MCF 10A (cell line): ENCODE measurements at regions of chrX and their contacts with region 1.

Region 1: DNA sequence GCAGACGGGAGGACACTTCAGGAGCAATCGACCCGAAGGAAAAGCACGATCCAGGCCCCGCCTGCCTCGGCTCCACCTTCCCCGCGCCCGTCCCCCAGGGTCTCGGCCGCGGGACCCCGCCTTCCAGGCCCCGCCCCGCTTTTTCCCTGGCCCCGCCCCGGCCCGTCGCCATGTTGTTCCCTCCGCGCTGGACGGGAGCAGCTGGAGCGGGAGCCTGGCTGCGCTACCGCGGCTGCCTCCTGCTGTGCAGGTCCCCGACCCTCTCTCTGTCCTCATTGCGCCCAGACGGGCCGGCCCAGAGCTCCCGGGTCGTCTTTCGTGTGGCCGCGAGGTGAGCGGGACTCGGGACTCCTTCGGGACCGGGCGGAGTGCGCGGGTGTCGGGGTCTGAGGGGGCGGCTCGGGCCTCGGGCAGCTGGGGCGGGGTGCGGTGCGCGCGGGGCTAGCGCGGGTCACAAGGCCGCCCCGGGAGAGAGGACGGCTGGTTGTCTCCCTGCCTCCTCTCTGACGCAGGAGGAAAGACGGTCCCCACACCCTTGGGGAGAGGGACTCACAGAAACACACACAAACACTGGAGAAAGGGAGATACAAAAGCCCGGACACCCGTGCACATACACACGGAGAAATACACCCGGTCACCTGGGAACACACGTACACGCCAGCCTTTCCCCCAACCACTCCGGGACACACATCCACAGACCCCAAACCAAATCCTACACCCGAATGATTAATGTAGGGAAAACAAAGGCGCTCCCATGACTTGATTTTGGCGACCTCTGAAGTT is at the start of gene RAB9A:
- DNase-seq: peak; percentile 86
- H3K4me3 Mint-ChIP-seq: peak within 1 kb of the TSS; percentile 84
- H3K27ac Mint-ChIP-seq: peak within 1 kb of the TSS; percentile 77
- H3K4me1 Mint-ChIP-seq: peaks cover 37% of the 10 kb centered on the region
- H3K27me3 Mint-ChIP-seq: peaks cover 8% of the 10 kb centered on the region
- CTCF ChIP-seq: no peak
- total RNA-seq, gene RAB9A: 28.0 and 32.3 TPM in 2 replicates

Region 2: DNA sequence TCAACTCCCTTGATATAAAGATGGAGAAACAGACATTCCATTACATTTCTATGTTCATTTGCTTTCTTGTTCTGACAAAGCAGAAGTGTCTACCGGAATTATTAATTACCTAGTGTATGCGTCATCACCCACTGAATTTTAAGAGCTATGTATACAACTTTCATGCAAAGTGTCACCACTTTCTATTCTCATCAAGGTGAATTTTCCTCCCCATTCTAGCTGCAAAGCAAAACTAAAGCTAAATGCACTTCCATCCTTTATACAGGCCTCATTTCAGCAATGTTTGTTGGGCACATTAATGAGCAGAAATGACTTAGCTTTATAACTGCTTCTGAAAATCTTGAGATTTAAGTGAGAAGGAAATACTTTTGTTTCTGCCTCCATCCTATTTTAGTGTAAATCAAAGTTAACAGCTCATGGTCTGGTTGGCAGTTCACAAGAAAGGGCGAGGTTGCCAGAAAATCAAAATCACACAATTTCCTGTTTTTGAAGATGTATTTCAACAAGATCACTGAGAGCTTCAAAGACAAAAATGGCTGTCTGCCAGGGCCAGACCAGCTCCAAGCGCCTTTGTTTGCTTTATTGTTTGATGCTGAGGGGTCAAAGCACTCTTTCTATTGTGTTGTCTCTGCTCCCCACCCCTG is 637.5 kb before region 1 on chrX:
- CTCF ChIA-PET with region 1: no interaction called
- POLR2A ChIA-PET with region 1: no interaction called
- intact Hi-C with region 1: no loop called
- DNase-seq: peak; percentile 30
- H3K4me3 Mint-ChIP-seq: no peak overlapping the region
- H3K27ac Mint-ChIP-seq: no peak overlapping the region
- H3K4me1 Mint-ChIP-seq: no peaks in the 10 kb centered on the region
- H3K27me3 Mint-ChIP-seq: no peaks in the 10 kb centered on the region
- CTCF ChIP-seq: no peak

Region 3: DNA sequence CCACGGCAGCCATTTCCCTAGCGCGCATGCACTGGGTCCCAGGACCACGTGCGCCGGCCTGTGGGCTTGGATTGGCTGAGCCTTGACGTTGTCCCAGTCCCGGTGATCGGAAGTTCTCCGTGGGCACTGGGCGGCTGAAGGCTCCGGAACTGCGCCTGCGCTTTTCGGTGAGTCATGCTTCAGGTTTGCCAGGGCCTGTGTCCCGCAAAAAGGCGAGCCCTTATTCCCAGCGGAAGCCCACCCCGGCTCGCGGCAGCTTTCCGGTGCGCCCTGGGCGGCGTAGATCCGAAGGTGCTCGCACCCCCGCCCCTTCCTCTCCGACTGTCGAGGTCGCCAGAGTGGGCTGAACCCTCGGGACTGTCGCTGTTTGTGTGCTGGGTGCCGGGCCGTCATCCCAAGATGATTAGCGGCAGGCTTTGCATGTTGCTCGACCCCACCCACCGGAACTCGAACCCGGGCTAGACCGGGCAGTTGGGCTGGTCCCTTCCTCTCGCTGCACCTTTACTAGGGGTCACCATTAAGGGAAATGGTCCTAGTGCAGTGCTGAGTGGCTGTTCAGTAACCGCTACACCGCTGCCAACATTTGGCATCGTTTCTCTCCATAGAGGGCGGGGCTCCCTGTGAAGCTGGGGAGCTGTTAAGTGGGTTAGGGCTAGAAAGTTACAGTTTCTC is 36.0 kb before region 1 on chrX and contains the start of gene TCEANC:
- CTCF ChIA-PET with region 1: interaction called, 5 read pairs
- POLR2A ChIA-PET with region 1: interaction called, 28 read pairs
- intact Hi-C with region 1: no loop called
- DNase-seq: peak; percentile 98
- H3K4me3 Mint-ChIP-seq: peak within 1 kb of the TSS; percentile 89
- H3K27ac Mint-ChIP-seq: peak within 1 kb of the TSS; percentile 59
- H3K4me1 Mint-ChIP-seq: peaks cover 5% of the 10 kb centered on the region
- H3K27me3 Mint-ChIP-seq: peaks cover 20% of the 10 kb centered on the region
- CTCF ChIP-seq: no peak
- total RNA-seq, gene TCEANC: 4.0 TPM in 2 replicates

Region 4: DNA sequence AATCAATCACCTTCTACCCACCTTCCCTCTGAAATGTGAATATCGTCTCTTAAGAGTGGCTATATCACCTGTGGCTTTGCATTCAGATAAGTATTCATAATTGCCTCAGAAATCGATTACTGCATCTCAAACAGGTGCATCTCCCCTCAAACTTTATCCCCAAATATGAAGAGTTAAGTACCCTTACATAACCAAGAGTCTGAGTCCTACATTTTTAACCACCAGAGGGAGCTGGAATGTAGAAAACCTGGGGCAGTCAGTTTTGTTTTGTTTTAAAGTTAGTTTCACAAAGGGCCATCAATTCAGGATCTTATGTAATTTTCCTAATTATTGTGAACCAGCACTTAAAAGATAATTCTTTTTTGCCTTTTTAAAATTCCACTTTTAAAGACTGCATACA is 30.5 kb before region 1 on chrX:
- CTCF ChIA-PET with region 1: interaction called, 6 read pairs
- POLR2A ChIA-PET with region 1: interaction called, 28 read pairs
- intact Hi-C with region 1: loop called (anchors 1 kb)
- DNase-seq: peak; percentile 79
- H3K4me3 Mint-ChIP-seq: no peak overlapping the region
- H3K27ac Mint-ChIP-seq: peak overlapping the region; percentile 23
- H3K4me1 Mint-ChIP-seq: peaks cover 10% of the 10 kb centered on the region
- H3K27me3 Mint-ChIP-seq: peaks cover 12% of the 10 kb centered on the region
- CTCF ChIP-seq: peak; percentile 66

Region 5: GRCh38 chrX:13669246-13669737 is 19.9 kb before region 1 on chrX:
- CTCF ChIA-PET with region 1: interaction called, 7 read pairs
- POLR2A ChIA-PET with region 1: interaction called, 49 read pairs
- intact Hi-C with region 1: no loop called
- DNase-seq: peak; percentile 99
- H3K4me3 Mint-ChIP-seq: peak overlapping the region; percentile 41
- H3K27ac Mint-ChIP-seq: peak overlapping the region; percentile 90
- H3K4me1 Mint-ChIP-seq: no peaks in the 10 kb centered on the region
- H3K27me3 Mint-ChIP-seq: peaks cover 22% of the 10 kb centered on the region
- CTCF ChIP-seq: no peak

Region 6: GRCh38 chrX:13676885-13677284 is 12.3 kb before region 1 on chrX:
- CTCF ChIA-PET with region 1: no interaction called
- POLR2A ChIA-PET with region 1: interaction called, 12 read pairs
- intact Hi-C with region 1: no loop called
- DNase-seq: no peak
- H3K4me3 Mint-ChIP-seq: no peak overlapping the region
- H3K27ac Mint-ChIP-seq: no peak overlapping the region
- H3K4me1 Mint-ChIP-seq: no peaks in the 10 kb centered on the region
- H3K27me3 Mint-ChIP-seq: peaks cover 42% of the 10 kb centered on the region
- CTCF ChIP-seq: no peak

Region 7: DNA sequence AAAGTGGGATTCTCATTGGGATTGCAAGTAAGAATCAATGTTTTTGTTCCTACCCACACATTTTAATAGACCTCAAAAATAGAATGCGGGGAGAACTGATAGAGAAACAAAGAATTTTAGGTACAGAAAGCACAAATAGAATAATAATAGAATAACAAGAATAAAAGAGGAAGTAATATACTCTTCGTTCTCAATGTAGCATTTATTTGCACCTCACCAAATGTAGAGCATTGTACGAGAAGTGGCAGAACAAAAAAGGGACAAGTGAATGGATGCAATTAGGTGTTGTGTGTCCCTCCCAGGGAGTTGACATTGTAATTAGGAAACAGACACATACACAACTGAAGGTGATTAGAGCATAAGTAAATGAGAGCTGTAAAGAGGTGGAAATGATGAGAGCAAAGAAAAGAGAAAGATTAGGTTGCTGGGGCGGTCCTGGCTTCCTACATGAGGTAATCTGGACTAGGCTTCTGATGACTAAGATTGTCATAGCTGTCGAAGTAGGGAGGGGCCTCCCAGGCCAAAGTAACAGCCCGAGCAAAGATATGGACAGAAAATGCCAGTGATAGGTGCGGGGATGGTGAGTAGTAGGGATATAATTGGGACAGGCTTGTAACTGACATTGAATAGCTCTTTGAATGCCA is 10.2 kb after region 1 on chrX:
- CTCF ChIA-PET with region 1: interaction called, 3 read pairs
- POLR2A ChIA-PET with region 1: interaction called, 18 read pairs
- intact Hi-C with region 1: no loop called
- DNase-seq: peak; percentile 61
- H3K4me3 Mint-ChIP-seq: no peak overlapping the region
- H3K27ac Mint-ChIP-seq: no peak overlapping the region
- H3K4me1 Mint-ChIP-seq: peaks cover 40% of the 10 kb centered on the region
- H3K27me3 Mint-ChIP-seq: no peaks in the 10 kb centered on the region
- CTCF ChIP-seq: no peak